ENCODE measurements at regions of chr11 and their contacts with region 1.

Region 1: DNA sequence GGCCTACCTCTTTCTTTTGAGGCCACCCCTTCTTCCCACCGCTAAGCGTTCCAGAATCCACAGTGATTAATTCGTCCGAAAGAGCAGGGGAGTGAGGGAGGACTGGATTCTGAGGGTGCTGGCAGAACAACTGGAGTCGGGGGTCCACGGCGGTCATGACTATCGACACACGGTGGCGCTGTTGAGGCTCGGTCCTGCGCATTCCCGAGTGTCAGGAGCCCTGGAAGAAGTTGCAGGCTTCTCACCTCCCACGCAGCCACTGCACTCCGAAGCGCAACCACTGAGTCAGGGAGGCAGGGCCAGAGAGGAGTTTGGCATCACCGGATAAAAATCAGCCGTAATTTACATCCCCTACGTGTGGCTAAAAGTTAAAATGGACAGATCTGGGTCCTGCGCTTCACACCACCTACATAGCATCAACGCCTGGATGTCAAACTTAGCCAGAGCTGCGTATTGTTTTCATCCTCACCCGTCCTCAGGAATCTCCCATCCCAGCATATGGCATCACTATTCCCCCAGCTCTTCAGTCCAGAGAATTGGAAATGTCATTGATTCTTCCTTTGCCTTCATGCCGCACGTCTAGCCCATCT is 10.7 kb upstream of the CTSF start:
- DNase-seq: peak; percentile 63 to 85 (median 71)
- H3K4me3 ChIP-seq: no peak overlapping the region
- H3K4me3 Mint-ChIP-seq: no peak overlapping the region
- H3K27ac ChIP-seq: no peak overlapping the region
- H3K27ac Mint-ChIP-seq: peak overlapping the region in 3 of 8 donors; percentile 12 to 91 (median 17)
- H3K4me1 ChIP-seq: peaks cover 3% of the 10 kb centered on the region
- H3K4me1 Mint-ChIP-seq: peaks cover 9 to 11% (median 10%) of the 10 kb centered on the region in 3 donors
- H3K27me3 ChIP-seq: no peaks in the 10 kb centered on the region
- H3K27me3 Mint-ChIP-seq: peaks cover 2 to 23% of the 10 kb centered on the region in 2 donors

Region 2: GRCh38 chr11:66568124-66568916 is 10.8 kb before region 1 on chr11 and contains the start of gene CTSF:
- CTCF ChIA-PET with region 1: interaction called, 12 read pairs
- POLR2A ChIA-PET with region 1: no interaction called
- DNase-seq: peak; percentile 46 to 81 (median 73)
- H3K4me3 ChIP-seq: peak within 1 kb of the TSS; percentile 41
- H3K4me3 Mint-ChIP-seq: peak within 1 kb of the TSS; percentile 45 to 83 (median 82)
- H3K27ac ChIP-seq: no peak within 1 kb of the TSS
- H3K27ac Mint-ChIP-seq: peak within 1 kb of the TSS in 4 of 8 donors; percentile 54 to 90 (median 88)
- H3K4me1 ChIP-seq: peaks cover 9% of the 10 kb centered on the region
- H3K4me1 Mint-ChIP-seq: peaks cover 4 to 15% (median 10%) of the 10 kb centered on the region in 3 donors
- H3K27me3 ChIP-seq: no peaks in the 10 kb centered on the region
- H3K27me3 Mint-ChIP-seq: peaks cover 5 to 11% of the 10 kb centered on the region in 2 donors
- total RNA-seq, gene CTSF: 5.6 to 6.0 TPM

Region 3: DNA sequence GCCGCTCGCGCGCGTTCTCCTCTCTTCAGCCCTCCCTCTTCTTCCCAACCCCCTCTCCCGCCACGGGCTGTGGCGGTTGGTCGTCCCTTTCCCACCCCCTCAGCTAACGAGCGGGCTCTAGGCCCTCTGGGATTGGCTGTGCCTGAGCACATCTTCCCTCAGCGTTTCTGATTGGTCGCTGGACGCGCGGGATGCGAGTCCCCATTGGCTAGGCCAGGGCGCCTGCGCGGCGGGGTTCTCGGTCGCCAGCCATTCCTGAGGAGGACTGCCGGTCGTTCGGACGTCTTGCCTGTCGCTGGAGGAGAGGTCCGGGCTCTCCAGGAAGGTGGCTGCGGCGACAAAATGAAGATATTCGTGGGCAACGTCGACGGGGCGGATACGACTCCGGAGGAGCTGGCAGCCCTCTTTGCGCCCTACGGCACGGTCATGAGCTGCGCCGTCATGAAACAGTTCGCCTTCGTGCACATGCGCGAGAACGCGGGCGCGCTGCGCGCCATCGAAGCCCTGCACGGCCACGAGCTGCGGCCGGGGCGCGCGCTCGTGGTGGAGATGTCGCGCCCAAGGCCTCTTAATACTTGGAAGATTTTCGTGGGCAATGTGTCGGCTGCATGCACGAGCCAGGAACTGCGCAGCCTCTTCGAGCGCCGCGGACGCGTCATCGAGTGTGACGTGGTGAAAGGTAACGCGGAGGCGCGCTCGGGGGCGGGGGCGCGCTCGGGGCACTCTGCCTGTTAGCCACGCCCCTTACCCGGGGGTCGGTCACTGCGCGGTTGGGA is 37.5 kb after region 1 on chr11 and contains the start of gene RBM14:
- CTCF ChIA-PET with region 1: interaction called, 10 read pairs
- POLR2A ChIA-PET with region 1: no interaction called
- DNase-seq: peak; percentile 97 to 99 (median 98)
- H3K4me3 ChIP-seq: peak within 1 kb of the TSS; percentile 99
- H3K4me3 Mint-ChIP-seq: peak within 1 kb of the TSS; percentile 97 to 99 (median 98)
- H3K27ac ChIP-seq: peak within 1 kb of the TSS; percentile 100
- H3K27ac Mint-ChIP-seq: peak within 1 kb of the TSS; percentile 97 to 100 (median 99)
- H3K4me1 ChIP-seq: peaks cover 41% of the 10 kb centered on the region
- H3K4me1 Mint-ChIP-seq: peaks cover 44 to 61% (median 47%) of the 10 kb centered on the region in 3 donors
- H3K27me3 ChIP-seq: no peaks in the 10 kb centered on the region
- H3K27me3 Mint-ChIP-seq: peaks cover 0 to 4% of the 10 kb centered on the region in 2 donors
- total RNA-seq, gene RBM14: 152 to 165 TPM

Measured in CD8-positive, alpha-beta memory T cell (primary cell).